Ovary (tissue), 10 donors: ENCODE measurements at regions of chr14 and their contacts with region 1.

Region 1: DNA sequence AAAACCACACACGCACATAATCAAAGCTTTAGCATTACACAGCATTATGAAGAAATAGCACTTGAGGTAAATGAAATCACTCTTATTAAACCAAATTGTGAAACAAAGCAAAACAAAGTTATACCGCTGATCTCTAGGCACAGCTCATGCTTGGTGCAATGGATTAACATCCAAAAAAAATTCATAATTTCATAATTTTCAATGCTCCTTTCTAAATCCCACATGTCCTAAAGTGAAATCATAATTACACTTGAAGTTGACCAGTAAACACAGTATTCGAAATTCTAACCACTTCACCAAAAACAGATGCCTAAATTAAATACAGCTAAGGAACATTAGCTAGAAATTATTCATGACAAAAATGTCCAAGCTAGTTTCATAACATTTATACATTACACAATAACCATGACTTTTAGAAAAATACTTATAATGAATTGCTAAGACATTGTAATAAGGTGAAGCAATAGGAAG is 1.5 kb downstream of the MLH3 start:
- DNase-seq: no peak
- H3K4me3 ChIP-seq: no peak overlapping the region
- H3K27ac ChIP-seq: no peak overlapping the region
- H3K4me1 ChIP-seq: peaks cover 4% of the 10 kb centered on the region
- H3K27me3 ChIP-seq: no peaks in the 10 kb centered on the region
- CTCF ChIP-seq: no peak
- EP300 ChIP-seq: no peak
- POLR2A ChIP-seq: no peak

Region 2: DNA sequence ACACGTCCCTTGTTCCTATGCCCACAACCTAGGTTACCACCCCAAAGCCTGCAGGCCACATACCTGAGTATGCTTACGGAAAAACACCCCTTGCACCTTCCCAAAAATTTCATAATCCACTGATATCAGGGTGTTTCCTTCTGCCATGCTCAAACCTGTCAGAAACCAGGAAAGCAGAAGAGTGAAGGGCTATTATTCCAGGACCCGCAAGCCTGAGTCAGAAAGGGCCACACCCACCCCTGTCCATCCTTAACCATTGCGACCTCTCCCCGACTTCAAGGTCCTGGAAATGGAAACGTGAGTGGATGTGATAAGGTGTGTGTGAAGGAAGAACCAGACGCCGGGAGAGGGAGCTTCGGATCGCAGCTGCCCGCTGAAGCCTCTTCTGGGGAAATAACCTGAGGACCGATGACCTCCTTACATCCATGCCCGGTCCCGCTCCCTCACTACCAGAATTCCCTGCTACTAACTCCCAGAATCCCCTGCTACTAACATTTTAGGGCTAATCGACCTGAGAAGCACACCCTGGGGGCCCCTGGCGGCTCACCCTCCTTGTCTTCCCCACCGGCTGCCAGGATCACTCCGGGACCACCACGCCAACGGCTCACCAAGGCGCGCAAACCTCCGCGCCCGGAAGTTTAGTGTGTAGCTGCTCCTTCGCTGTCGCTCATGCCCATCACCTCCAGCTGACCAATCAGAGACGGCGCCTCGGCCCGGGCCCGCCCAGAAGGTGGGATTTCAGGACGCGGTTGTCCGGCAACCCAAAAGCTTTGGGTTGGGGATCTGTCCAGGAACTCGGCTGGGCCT is 13.8 kb after region 1 on chr14 and contains the start of gene ACYP1:
- intact Hi-C with region 1: loop called in 1 of 4 experiments (anchors 2 kb)
- DNase-seq: peak; percentile 89 to 97 (median 96)
- H3K4me3 ChIP-seq: peak within 1 kb of the TSS; percentile 75
- H3K27ac ChIP-seq: peak within 1 kb of the TSS in 1 of 2 donors; percentile 52
- H3K4me1 ChIP-seq: peaks cover 9% of the 10 kb centered on the region
- H3K27me3 ChIP-seq: no peaks in the 10 kb centered on the region
- CTCF ChIP-seq: no peak
- EP300 ChIP-seq: no peak
- POLR2A ChIP-seq: peak; percentile 30
- total RNA-seq, gene ACYP1: 5.5 to 27.7 (median 11.2) TPM